Adrenal gland (tissue), 19 donors: ENCODE measurements at regions of chr7 and their contacts with region 1.

Region 1: GRCh38 chr7:2757904-2758672 is 70.1 kb downstream of the AMZ1 start:
- DNase-seq: peak; percentile 64 to 90 (median 79)
- H3K4me3 ChIP-seq: peak overlapping the region in 1 of 4 donors; percentile 18
- H3K27ac ChIP-seq: peak overlapping the region; percentile 73 to 94 (median 84)
- H3K4me1 ChIP-seq: peaks cover 32 to 56% of the 10 kb centered on the region in 2 donors
- H3K27me3 ChIP-seq: no peaks in the 10 kb centered on the region
- CTCF ChIP-seq: no peak
- POLR2A ChIP-seq: peak in 1 of 2 donors; percentile 52

Region 2: GRCh38 chr7:2838873-2839578 is 80.9 kb after region 1 on chr7:
- intact Hi-C with region 1: loop called in 1 of 2 experiments (anchors 10 kb)
- DNase-seq: no peak
- H3K4me3 ChIP-seq: no peak overlapping the region
- H3K27ac ChIP-seq: no peak overlapping the region
- H3K4me1 ChIP-seq: peaks cover 11 to 45% of the 10 kb centered on the region in 2 donors
- H3K27me3 ChIP-seq: no peaks in the 10 kb centered on the region
- CTCF ChIP-seq: no peak
- POLR2A ChIP-seq: no peak

Region 3: GRCh38 chr7:2903682-2904162 is 145.6 kb after region 1 on chr7:
- intact Hi-C with region 1: no loop called
- DNase-seq: no peak
- H3K4me3 ChIP-seq: no peak overlapping the region
- H3K27ac ChIP-seq: no peak overlapping the region
- H3K4me1 ChIP-seq: no peaks in the 10 kb centered on the region
- H3K27me3 ChIP-seq: no peaks in the 10 kb centered on the region
- CTCF ChIP-seq: no peak
- POLR2A ChIP-seq: no peak